Esophagus squamous epithelium (tissue), 5 donors: ENCODE measurements at regions of chr9 and their contacts with region 1.

Region 1: DNA sequence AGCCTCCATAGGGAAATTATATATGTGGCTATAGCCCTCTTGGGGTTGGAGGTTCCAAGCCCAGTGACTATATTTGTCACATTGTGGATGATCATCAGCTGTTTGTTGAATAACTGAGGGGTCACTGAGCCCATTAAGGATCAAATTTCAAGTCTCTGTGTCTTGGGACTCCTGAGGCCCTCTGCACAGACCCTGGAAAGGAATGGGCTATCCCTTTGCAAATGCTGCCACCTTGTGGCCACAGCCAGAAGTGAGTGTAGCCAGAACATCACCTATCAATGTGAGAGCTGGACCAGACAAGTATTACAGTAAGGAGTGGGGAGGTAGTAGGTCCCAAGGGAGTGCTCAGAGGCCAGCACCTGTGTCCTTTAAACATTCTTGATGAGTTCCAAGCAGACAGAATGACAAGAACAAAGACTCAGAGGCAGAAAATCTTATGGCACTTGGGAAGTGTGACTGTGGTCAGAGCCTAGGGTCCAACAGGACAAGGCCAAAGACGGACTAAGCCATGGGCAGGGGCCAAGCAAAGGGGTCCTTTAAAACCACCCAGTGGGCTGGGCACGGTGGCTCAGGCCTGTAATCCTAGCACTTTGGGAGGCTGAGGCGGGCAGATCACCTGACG is 8.2 kb downstream of the RPP25L start:
- DNase-seq: no peak
- H3K4me3 ChIP-seq: no peak overlapping the region
- H3K27ac ChIP-seq: no peak overlapping the region
- H3K4me1 ChIP-seq: peaks cover 0 to 13% (median 0%) of the 10 kb centered on the region in 3 donors
- H3K27me3 ChIP-seq: no peaks in the 10 kb centered on the region
- CTCF ChIP-seq: peak; percentile 87 to 93 (median 91)
- POLR2A ChIP-seq: no peak

Region 2: DNA sequence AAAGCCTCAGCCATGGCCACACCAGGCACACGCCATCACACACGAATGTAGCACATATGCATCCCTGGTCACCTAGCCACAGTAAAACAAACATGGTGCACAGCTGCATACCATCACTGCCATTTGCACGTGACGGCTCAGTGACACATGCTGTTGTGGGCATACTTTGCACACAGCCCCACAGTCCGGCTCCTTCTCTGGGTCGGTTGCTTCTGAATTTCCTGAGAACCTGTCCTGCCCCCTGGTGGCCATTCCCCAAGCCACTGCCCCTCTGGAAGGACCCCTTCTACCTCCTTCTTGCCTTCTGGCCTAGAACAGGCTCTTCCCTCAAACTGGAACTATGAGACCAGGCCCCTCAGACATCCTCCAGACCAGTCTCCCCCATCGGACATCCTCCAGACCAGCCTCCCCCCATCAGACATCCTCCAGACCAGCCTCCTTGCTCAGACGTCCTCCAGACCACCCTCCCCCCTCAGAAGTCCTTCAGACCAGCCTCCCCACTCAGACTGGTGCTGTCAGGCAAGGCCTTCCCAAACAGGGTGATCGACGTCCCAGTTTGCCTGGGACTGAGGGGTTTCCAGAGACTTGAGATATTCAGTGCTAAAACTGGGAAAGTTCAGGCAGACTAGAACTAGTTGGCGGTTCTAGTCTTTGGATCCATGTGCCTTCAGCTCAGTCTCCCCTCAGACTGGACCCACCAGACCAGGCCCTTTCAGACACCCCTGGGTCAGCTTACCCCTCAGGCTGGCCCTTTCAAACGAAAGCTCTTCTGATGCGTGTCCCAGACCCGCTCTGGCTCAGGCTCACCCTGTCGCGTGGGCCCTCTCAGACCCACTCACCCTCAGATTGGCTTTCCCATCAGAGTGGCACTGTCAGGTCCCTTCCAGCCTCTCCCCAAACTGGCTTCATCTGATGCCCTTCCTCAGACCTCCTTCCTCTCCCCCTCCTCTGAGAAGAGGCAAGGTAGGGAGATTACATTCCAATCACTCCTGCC is 56.6 kb before region 1 on chr9:
- intact Hi-C with region 1: loop called (anchors 5 kb)
- DNase-seq: no peak
- H3K4me3 ChIP-seq: no peak overlapping the region
- H3K27ac ChIP-seq: no peak overlapping the region
- H3K4me1 ChIP-seq: peaks cover 0 to 8% (median 0%) of the 10 kb centered on the region in 3 donors
- H3K27me3 ChIP-seq: peaks cover 0 to 21% (median 0%) of the 10 kb centered on the region in 4 donors
- CTCF ChIP-seq: peak; percentile 31 to 68 (median 52)
- POLR2A ChIP-seq: no peak